Right ventricle myocardium inferior (tissue), 1 donor: ENCODE measurements at regions of chr2 and their contacts with region 1.

Region 1: DNA sequence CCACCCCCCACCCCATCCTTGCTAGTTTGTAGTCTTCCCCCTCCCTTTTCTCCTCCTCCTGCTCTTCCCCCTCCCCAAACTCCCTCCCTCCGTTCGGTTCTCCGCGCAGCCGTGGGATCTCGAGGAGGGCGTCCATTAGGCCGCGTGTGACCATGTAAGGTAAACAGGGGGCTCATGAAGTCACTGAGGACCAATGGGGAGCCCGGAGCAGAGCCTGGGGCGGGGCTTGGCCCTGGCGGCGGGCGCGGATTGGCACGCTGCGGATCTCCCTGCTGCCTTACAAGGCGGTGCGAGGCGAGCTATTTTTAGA is 246 bp upstream of the KLF7 start:
- DNase-seq: peak; percentile 99
- ATAC-seq: peak; percentile 93

Region 2: DNA sequence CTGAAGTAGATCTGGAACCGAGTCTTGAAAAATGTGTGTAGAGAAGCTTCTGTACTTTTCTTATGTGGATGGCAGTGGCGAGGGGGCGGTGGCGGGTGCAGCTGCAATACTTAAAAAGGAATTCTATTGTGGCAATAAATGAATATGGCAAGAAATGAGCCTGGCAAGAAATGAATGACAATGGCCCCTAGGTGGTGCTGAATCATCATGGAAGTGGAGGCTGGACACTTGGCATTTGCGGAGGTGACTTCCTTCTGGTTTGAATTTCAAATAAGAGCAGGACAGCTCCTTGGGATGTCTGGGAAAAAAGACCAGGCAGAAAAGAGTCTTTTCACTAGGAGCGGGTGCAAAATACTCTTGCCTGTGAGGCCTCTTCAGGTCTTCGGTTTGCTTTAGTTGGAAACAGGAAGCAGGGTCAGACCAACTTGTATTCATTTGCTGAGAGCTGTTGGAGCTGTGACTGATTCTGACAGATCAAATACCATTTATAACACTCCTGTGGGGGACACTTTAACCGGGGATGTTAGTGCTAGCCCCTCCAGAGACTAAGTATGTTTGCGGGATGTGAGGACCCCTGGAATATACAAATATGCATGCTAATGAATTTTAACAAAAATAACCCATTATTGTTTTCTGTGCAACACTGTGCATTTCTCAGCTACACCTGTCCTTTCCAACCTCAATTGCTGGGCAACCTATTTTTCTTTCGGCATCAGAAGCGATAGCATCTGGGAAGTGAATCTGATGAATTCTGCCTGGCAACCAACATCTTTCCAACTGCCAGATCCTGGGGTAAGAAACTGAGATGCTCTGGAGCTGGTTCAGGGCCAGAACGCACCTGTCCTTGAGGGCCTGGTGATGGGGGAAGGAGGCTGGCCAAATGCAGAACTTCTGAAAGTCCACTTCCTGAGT is 365.2 kb before region 1 on chr2:
- intact Hi-C with region 1: loop called (anchors 10 kb)
- DNase-seq: peak; percentile 51
- ATAC-seq: peak; percentile 70

Region 3: DNA sequence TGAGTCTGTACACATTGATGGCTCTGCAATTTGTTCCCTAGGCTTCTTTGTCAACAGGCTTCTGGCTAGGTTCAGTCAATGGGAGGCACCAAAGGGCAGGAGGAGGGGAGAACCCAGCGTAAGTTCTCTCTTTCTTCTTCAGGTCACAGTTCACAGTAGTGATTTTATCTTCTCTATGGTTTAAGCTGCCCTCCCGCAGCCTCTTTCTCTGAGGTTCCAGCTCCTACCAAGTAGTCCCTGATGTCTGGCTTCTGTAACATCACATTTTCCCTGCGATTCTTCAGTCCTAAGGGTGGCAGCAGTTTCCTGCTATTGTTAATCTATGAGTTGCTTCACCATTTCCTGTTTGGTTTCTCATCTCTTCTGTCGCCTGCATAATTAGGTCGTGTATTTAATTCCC is 119.3 kb before region 1 on chr2:
- intact Hi-C with region 1: loop called (anchors 5 kb)
- DNase-seq: no peak
- ATAC-seq: peak; percentile 76

Region 4: DNA sequence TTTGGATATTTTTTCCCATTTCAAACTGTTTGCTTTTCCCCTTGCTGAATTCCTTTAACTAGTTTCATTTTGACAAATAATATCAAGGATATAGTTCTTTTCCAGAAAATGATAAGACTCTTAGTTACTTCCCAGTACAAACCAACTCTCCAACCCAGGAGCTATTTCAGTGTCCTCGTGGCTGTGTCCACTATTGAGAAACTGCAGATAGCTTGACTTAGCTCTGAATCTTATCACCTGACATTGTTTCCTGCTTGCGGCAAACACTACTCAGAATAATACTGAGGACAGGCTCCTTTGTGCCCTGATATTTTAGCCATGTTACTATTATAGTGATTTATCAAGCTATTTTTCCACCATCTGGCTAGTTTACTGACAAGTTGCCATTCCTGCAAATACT is 74.8 kb before region 1 on chr2:
- intact Hi-C with region 1: loop called (anchors 2 kb)
- DNase-seq: no peak
- ATAC-seq: peak; percentile 73

Region 5: DNA sequence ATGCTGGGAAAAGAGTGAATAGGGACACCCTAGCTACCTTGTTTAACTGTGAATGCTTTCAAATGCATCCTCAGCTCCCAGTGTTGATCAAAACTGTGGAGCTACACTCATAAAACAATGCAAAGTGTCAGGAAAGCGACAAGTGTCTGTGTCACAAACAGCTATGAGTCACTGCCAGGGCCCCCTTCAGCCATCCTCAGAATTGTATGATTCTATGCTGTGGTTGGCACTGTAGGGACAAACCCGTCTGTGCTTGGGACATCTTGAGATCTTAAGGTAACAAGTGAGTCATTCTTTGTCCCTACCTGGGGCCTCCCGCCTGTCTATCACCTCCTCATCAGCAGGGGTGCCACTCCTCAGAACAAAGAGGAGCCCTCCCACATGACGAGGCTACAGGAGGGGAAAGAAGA is 42.7 kb before region 1 on chr2:
- intact Hi-C with region 1: no loop called
- DNase-seq: no peak
- ATAC-seq: no peak

Region 6: DNA sequence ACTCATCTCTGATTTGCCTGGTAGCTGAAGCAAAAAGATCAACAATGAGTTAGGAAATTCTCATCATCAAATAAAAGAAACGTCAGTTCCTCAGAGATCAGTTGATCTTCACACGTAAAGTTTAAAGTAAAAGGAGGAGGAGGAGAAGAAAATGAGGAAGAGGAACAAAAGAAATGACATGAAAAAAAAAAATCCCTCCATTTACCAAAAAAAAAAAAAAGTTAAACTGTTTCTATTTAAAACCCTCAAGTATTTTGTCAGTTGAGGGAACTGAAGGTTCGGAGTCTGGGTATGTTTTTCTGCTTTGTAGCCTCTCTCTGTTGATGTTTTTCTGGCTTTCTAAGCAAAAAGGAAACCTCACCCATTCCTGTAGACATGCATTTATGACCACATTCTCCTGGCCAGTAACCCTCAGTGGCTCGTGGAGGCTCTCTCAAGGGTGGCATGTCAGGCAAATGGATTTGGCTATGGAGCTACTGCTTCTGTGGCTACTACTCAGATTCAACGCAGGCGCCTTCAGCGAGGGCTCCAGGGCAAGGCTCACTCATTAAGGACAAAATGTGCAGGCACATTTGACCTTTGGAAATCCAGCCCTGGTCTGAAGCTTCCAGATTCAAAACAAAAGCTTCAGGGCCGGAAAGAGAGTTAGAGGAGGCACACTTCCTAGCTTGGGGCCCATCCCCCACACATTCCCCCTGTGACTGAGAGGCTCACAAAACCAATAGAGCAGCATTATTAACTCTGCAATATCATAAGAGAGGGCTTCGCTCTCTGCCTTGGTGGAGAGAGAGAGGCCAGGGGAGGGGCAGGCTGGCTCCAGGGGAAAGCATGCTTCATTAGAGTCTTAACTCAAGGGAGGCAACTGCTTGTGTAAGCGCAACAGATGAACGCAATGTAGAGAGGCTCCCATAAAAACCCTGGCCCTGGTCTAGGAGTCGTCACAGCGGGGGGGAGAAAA is 22.5 kb before region 1 on chr2:
- intact Hi-C with region 1: loop called (anchors 2 kb)
- DNase-seq: peak; percentile 91
- ATAC-seq: peak; percentile 84

Region 7: DNA sequence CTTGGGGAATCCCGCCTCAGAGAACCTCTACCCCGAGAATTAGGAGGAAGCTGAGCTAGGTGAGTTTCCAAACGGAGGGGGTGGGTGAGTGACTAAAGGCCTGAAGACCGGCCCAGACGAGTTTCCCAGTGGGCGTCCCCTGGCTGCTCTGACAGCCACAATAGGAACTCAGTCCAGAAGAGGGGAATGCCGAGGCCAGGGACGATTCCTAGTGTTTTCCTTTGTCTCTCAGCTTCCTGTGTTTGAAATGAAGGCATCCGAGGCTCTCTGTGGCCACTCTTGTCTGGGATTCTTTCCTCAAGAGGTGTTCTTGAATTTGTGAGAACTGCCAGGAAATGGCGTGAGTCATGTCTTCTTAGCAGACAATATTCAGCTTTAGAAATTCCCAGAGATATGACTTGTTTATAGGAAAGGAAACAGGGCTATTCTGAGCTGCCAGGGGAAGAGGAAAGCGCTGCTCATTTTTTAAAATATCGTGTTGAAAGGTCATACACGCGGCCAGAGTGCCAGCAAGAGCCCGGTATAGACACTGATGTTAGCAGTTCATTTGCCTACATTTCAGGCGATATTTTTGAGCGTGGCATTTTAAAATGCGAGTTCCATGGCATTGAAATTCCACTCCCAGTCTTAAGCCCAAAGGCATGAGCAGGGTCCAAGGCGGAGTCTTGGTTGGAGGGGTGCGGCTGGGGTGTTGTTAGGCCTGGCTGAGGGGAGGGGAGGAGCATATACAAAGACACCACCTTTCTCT is 168.8 kb after region 1 on chr2:
- intact Hi-C with region 1: loop called (anchors 2 kb)
- DNase-seq: no peak
- ATAC-seq: peak; percentile 55

Region 8: GRCh38 chr2:207561386-207562080 is 395.5 kb after region 1 on chr2:
- intact Hi-C with region 1: no loop called
- DNase-seq: no peak
- ATAC-seq: no peak